ENCODE measurements at regions of chr3 and their contacts with region 1.

Region 1: DNA sequence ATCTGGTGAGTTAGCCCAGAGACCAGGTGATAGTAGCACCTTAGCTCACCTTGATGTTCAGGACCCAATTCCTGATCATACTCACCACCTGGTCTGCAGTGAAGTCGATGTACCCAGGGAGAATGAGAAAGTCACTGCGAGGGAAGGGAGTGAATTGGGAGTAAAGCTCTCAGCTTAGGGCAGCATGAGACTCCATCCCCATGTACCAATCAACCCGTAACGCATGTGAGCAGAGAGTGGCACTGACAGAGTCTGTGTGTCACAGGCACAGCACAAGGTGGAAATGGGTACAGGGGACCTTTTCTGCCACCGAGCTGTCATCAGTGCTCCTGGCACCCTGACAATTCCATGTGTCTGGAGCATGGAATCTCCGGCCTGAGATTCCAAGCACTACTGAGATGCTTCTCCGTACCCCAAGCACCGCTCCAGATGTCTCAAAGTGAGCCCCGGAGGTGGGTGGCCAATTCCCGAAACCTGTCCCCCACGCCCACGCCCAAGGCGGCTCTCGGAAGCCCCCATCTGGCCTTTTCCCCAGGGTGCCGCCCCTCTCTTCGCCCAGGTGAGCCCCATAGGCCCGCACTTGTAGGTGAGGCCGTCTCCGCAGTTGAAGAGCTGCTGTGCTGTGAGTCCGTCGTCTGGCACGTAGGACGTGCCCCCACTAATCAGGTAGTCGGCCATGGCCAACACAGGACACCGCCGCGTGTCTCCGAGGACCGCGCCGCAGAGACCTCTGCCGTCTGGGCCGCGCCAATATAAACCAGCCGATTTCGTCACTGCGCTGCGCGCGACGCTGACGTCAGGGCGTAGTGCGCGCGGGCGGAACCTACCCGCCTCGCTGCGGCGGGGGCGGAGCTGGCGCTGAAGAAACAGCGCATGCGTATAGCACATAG is at the start of gene IMPDH2:
- DNase-seq: peak; percentile 94
- H3K4me3 Mint-ChIP-seq: peak within 1 kb of the TSS; percentile 84
- H3K27ac Mint-ChIP-seq: peak within 1 kb of the TSS; percentile 86
- H3K4me1 Mint-ChIP-seq: peaks cover 50% of the 10 kb centered on the region
- H3K27me3 Mint-ChIP-seq: no peaks in the 10 kb centered on the region
- total RNA-seq, gene IMPDH2: 131 to 133 TPM

Region 2: GRCh38 chr3:48984663-48985062 is 44.3 kb before region 1 on chr3:
- CTCF ChIA-PET with region 1: interaction called, 95 read pairs
- POLR2A ChIA-PET with region 1: interaction called, 190 read pairs
- DNase-seq: no peak
- H3K4me3 Mint-ChIP-seq: no peak overlapping the region
- H3K27ac Mint-ChIP-seq: peak overlapping the region; percentile 54
- H3K4me1 Mint-ChIP-seq: peaks cover 16% of the 10 kb centered on the region
- H3K27me3 Mint-ChIP-seq: no peaks in the 10 kb centered on the region

Region 3: GRCh38 chr3:48989796-48990635 is 38.9 kb before region 1 on chr3 and contains the start of gene P4HTM:
- CTCF ChIA-PET with region 1: interaction called, 95 read pairs
- POLR2A ChIA-PET with region 1: interaction called, 190 read pairs
- DNase-seq: peak; percentile 79
- H3K4me3 Mint-ChIP-seq: peak within 1 kb of the TSS; percentile 92
- H3K27ac Mint-ChIP-seq: peak within 1 kb of the TSS; percentile 90
- H3K4me1 Mint-ChIP-seq: peaks cover 45% of the 10 kb centered on the region
- H3K27me3 Mint-ChIP-seq: no peaks in the 10 kb centered on the region
- total RNA-seq, gene P4HTM: 48.4 to 49.9 TPM

Region 4: DNA sequence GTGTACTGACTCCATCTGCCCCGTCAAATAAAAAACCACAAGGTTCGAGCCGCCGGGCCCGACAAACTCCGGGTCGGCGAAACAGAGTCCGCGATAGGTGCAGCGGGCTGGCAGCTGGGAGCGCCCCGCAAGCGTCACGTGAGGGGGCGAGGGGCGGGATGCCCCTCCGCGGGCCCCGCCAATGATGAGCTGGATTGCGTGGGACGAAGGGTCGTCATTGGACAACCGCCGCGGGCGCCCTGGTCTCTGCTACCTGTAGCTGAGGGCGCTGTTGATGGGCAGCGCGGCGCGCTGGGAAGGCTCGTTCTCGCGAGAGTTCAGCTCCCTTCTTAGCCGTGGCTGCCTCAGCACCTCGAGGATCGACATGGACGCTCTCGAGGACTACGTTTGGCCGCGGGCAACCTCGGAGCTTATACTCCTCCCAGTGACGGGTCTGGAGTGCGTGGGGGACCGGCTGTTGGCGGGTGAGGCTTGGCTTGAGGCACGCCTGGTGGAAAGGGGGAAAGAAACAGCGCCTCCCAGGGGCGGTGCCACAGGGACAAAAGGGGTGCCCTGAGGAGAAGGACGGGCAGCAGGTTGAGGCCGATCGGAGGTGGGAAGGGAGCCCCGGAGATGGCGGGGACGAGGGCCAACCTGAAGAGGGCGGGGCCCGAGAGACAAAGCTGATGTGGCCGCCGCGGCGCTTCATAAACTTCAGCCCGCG is 21.7 kb before region 1 on chr3 and contains the start of gene WDR6:
- CTCF ChIA-PET with region 1: interaction called, 117 read pairs
- POLR2A ChIA-PET with region 1: interaction called, 309 read pairs
- DNase-seq: peak; percentile 98
- H3K4me3 Mint-ChIP-seq: peak within 1 kb of the TSS; percentile 99
- H3K27ac Mint-ChIP-seq: peak within 1 kb of the TSS; percentile 99
- H3K4me1 Mint-ChIP-seq: peaks cover 34% of the 10 kb centered on the region
- H3K27me3 Mint-ChIP-seq: no peaks in the 10 kb centered on the region
- total RNA-seq, gene WDR6: 135 to 148 TPM

Region 5: DNA sequence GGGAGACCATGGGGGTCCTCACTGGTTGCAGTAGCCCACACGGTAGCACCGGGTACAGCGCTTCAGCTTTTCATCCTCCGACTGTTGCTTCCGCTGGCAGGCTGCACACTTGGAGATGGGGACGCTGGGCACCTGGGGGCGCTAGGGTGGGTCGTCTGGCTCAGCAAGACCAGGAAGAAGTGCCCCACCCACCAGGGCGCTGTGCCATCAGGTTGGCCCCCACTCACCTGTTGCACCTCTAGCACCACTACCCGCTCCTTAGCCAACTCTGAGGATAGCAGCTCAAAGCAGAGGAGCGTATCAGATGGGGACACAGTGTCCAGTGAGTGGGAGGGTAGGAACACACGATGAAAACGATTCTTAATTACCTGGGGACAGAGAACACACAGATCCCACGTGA is 83.3 kb after region 1 on chr3:
- CTCF ChIA-PET with region 1: no interaction called
- POLR2A ChIA-PET with region 1: no interaction called
- DNase-seq: no peak
- H3K4me3 Mint-ChIP-seq: no peak overlapping the region
- H3K27ac Mint-ChIP-seq: no peak overlapping the region
- H3K4me1 Mint-ChIP-seq: no peaks in the 10 kb centered on the region
- H3K27me3 Mint-ChIP-seq: no peaks in the 10 kb centered on the region